PC-9 (cell line): ENCODE measurements at regions of chr9 and their contacts with region 1.

Region 1: GRCh38 chr9:78035383-78035993 is 3.9 kb upstream of the GNAQ start:
- DNase-seq: peak; percentile 46 to 47
- H3K4me3 ChIP-seq: no peak overlapping the region
- H3K27ac ChIP-seq: no peak overlapping the region
- H3K4me1 ChIP-seq: peaks cover 39% of the 10 kb centered on the region
- H3K27me3 ChIP-seq: no peaks in the 10 kb centered on the region
- CTCF ChIP-seq: peak; percentile 89

Region 2: GRCh38 chr9:77433675-77434445 is 601.6 kb before region 1 on chr9:
- CTCF ChIA-PET with region 1: interaction called, 5 read pairs
- POLR2A ChIA-PET with region 1: no interaction called
- intact Hi-C with region 1: loop called (anchors 1 kb)
- DNase-seq: peak in 1 of 2 experiments; percentile 51
- H3K4me3 ChIP-seq: no peak overlapping the region
- H3K27ac ChIP-seq: no peak overlapping the region
- H3K4me1 ChIP-seq: no peaks in the 10 kb centered on the region
- H3K27me3 ChIP-seq: no peaks in the 10 kb centered on the region
- CTCF ChIP-seq: peak; percentile 92

Region 3: DNA sequence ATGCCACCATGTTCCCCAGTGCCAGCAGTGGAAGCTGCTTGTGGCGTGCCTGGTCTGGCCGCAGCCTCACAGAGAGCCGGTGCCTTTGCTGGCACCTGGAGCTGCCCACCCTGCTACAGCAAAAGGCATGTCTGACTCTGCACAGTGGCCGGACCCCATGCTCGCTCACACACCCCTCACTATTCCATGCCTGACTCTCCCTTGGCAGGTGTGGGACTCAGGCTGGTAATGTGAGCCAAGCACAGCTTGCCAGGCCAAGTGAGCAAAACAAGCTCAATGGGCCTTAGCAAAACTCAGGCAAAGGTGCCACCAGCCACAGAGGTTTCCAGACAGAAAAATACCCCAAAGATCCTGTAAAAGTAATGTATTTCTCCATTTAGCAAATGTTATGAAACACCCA is 402.8 kb before region 1 on chr9:
- CTCF ChIA-PET with region 1: no interaction called
- POLR2A ChIA-PET with region 1: interaction called, 13 read pairs
- intact Hi-C with region 1: no loop called
- DNase-seq: no peak
- H3K4me3 ChIP-seq: no peak overlapping the region
- H3K27ac ChIP-seq: no peak overlapping the region
- H3K4me1 ChIP-seq: no peaks in the 10 kb centered on the region
- H3K27me3 ChIP-seq: no peaks in the 10 kb centered on the region
- CTCF ChIP-seq: no peak

Region 4: GRCh38 chr9:77827104-77827784 is 208.2 kb before region 1 on chr9:
- CTCF ChIA-PET with region 1: no interaction called
- POLR2A ChIA-PET with region 1: no interaction called
- intact Hi-C with region 1: no loop called
- DNase-seq: no peak
- H3K4me3 ChIP-seq: no peak overlapping the region
- H3K27ac ChIP-seq: no peak overlapping the region
- H3K4me1 ChIP-seq: no peaks in the 10 kb centered on the region
- H3K27me3 ChIP-seq: no peaks in the 10 kb centered on the region
- CTCF ChIP-seq: no peak

Region 5: DNA sequence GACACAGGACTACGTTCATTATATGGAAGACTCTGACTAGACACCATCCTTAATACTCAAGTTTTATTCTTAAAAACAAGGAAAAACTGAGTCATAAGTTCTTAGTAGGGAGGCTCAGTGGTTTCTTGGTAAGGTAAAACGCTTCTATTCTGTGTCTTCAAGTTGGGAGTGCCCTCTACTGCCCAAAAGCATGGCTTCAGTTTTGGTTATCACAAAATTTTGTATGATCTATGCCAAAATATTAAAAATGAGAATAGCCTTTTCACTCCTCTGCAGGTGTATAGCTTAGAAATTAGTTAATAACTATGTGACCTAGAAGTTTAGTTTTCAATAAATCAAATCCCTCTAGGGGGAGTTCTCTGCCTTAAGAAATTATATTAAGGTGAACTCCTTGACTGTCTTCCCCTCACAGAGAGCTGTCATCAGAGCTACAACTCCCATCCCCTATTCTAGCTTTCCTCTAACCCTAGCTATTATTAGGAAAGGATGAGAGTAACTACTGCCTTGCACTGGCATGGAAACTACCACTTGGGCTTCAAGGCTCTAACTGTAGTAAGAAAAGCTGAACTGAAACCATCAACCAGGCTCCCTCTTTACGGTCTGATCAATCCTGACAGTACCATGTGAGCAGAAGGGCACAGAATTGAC is 193.6 kb before region 1 on chr9:
- CTCF ChIA-PET with region 1: interaction called, 8 read pairs
- POLR2A ChIA-PET with region 1: no interaction called
- intact Hi-C with region 1: loop called (anchors 5 kb)
- DNase-seq: no peak
- H3K4me3 ChIP-seq: no peak overlapping the region
- H3K27ac ChIP-seq: no peak overlapping the region
- H3K4me1 ChIP-seq: peaks cover 22% of the 10 kb centered on the region
- H3K27me3 ChIP-seq: no peaks in the 10 kb centered on the region
- CTCF ChIP-seq: peak; percentile 45

Region 6: GRCh38 chr9:77977210-77977611 is 58.3 kb before region 1 on chr9:
- CTCF ChIA-PET with region 1: interaction called, 14 read pairs
- POLR2A ChIA-PET with region 1: interaction called, 12 read pairs
- intact Hi-C with region 1: loop called (anchors 2 kb)
- DNase-seq: peak; percentile 39 to 43
- H3K4me3 ChIP-seq: no peak overlapping the region
- H3K27ac ChIP-seq: no peak overlapping the region
- H3K4me1 ChIP-seq: peaks cover 25% of the 10 kb centered on the region
- H3K27me3 ChIP-seq: no peaks in the 10 kb centered on the region
- CTCF ChIP-seq: peak; percentile 36; the same call in 1 of the 2 replicates

Region 7: DNA sequence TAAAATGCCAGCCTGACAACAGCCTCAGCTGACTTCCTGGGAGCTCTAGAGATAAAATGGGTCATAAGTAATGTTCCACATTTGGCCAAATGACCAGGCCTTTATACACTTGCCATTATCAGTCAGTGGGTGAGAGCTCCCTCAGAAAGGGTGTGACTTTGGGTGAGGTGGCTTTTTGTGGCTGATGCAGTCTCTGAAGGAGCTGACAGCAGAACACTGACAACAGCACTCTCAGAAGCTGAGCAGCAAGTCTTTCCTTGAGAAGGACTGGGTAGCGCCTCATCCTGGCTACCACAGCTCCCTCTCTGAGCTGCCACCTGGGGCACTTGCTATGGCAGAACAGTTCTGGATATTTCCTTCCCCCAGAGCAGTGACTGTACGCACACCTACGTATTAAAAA is 18.1 kb after region 1 on chr9:
- CTCF ChIA-PET with region 1: no interaction called
- POLR2A ChIA-PET with region 1: no interaction called
- intact Hi-C with region 1: no loop called
- DNase-seq: no peak
- H3K4me3 ChIP-seq: no peak overlapping the region
- H3K27ac ChIP-seq: no peak overlapping the region
- H3K4me1 ChIP-seq: no peaks in the 10 kb centered on the region
- H3K27me3 ChIP-seq: 0 out of 2 replicates have a peak, but pooled peaks cover 3% of the 10 kb centered on the region
- CTCF ChIP-seq: no peak

Region 8: DNA sequence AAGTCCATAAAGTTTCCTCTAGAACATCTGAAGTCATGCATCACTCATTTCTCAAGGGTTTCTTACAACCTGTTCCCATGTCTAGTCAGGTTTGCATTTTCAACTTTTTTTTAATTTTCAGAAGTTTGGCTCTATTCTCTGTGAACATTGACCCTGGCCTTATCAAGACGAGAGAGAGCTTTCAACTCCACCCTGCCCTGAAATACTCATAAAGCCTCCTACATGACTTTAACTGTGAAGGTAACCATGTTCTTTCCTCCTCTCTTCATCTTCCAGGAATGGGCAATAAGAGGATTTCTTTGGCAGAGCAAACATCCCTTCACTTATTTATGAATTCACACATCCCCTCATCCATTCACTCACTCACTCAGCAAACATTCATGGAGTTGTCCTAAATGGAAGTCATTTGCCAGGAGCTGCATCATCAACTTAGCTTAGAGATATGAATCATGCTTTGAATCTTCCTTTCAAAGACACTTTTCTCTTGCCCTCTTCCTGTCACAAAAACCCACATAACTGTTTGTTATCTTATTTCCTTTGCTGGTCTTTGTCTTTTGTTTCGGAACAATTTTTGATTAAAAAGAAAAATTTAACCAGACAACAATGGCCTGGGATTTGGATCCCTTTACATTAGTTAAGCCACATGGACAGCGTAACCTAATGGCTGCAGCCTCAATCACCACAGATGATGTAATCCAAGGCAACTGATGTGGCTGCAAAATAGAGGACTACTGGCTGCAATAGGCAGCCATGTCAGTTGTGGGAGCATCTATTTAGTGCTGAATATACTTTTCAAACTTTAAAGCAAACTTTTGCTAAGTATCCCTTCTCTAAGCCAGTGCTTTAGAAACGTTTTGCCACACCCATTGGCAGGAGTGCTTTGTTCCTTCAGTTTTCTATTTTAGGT is 39.1 kb after region 1 on chr9:
- CTCF ChIA-PET with region 1: no interaction called
- POLR2A ChIA-PET with region 1: no interaction called
- intact Hi-C with region 1: no loop called
- DNase-seq: no peak
- H3K4me3 ChIP-seq: no peak overlapping the region
- H3K27ac ChIP-seq: no peak overlapping the region
- H3K4me1 ChIP-seq: no peaks in the 10 kb centered on the region
- H3K27me3 ChIP-seq: no peaks in the 10 kb centered on the region
- CTCF ChIP-seq: no peak

Region 9: GRCh38 chr9:78296893-78297671 is 261.6 kb after region 1 on chr9 and contains the start of gene PSAT1:
- CTCF ChIA-PET with region 1: no interaction called
- POLR2A ChIA-PET with region 1: no interaction called
- intact Hi-C with region 1: loop called (anchors 1 kb)
- DNase-seq: peak; percentile 94 to 96
- H3K4me3 ChIP-seq: peak within 1 kb of the TSS; percentile 63
- H3K27ac ChIP-seq: peak within 1 kb of the TSS; percentile 97
- H3K4me1 ChIP-seq: peaks cover 22% of the 10 kb centered on the region
- H3K27me3 ChIP-seq: no peaks in the 10 kb centered on the region
- CTCF ChIP-seq: no peak
- total RNA-seq, gene PSAT1: 238 and 315 TPM in 2 replicates